ENCODE measurements at regions of chr12 and their contacts with region 1.

Region 1: DNA sequence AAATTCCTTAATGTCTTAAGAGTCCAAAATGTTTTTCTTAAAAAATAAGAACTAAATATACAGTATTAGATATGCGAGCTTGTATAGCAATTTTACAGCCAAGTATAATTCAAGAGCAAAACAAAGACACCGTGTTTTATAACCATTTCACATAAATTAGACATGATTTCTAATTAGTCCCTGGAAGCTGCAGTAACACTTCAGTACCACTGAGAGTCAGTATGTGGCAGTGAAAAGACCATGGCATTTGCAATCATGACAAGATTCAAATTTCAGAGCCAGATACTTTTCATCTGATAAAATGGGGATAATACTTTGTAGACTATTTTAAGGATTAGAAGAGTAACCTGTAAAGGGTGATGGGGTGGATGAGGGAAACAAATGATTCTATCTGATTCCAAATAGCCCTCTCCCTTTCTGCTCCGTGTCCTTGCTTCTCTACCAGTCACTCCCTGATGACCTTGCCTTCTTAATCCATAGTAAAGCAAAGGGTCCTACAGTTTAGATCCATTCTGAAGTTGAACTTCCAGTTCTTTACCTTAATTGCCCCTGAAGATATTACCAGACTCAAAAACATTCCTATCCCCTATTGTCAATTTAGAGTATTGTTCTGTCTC is 145.4 kb upstream of the ABCD2 start:
- DNase-seq: peak; percentile 52
- H3K4me3 ChIP-seq: no peak overlapping the region
- H3K27ac ChIP-seq: no peak overlapping the region
- H3K4me1 ChIP-seq: no peaks in the 10 kb centered on the region
- H3K27me3 ChIP-seq: no peaks in the 10 kb centered on the region
- CTCF ChIP-seq: peak; percentile 59 to 64
- POLR2A ChIP-seq: no peak

Region 2: GRCh38 chr12:39553471-39553870 is 211.6 kb before region 1 on chr12:
- CTCF ChIA-PET with region 1: no interaction called
- POLR2A ChIA-PET with region 1: no interaction called
- dilution Hi-C with region 1: no loop called
- intact Hi-C with region 1: no loop called
- DNase-seq: no peak
- H3K4me3 ChIP-seq: no peak overlapping the region
- H3K27ac ChIP-seq: no peak overlapping the region
- H3K4me1 ChIP-seq: no peaks in the 10 kb centered on the region
- H3K27me3 ChIP-seq: no peaks in the 10 kb centered on the region
- CTCF ChIP-seq: no peak
- POLR2A ChIP-seq: no peak

Region 3: GRCh38 chr12:39958377-39958776 is 193.3 kb after region 1 on chr12:
- CTCF ChIA-PET with region 1: interaction called, 3 read pairs
- POLR2A ChIA-PET with region 1: no interaction called
- dilution Hi-C with region 1: no loop called
- intact Hi-C with region 1: loop called (anchors 1 kb)
- DNase-seq: peak; percentile 10
- H3K4me3 ChIP-seq: no peak overlapping the region
- H3K27ac ChIP-seq: no peak overlapping the region
- H3K4me1 ChIP-seq: no peaks in the 10 kb centered on the region
- H3K27me3 ChIP-seq: no peaks in the 10 kb centered on the region
- CTCF ChIP-seq: peak in 1 of 2 donors; percentile 19
- POLR2A ChIP-seq: no peak

Region 4: GRCh38 chr12:39990122-39991101 is 225.4 kb after region 1 on chr12:
- CTCF ChIA-PET with region 1: interaction called, 70 read pairs
- POLR2A ChIA-PET with region 1: no interaction called
- dilution Hi-C with region 1: no loop called
- intact Hi-C with region 1: loop called (anchors 1 kb)
- DNase-seq: peak; percentile 65
- H3K4me3 ChIP-seq: no peak overlapping the region
- H3K27ac ChIP-seq: no peak overlapping the region
- H3K4me1 ChIP-seq: no peaks in the 10 kb centered on the region
- H3K27me3 ChIP-seq: no peaks in the 10 kb centered on the region
- CTCF ChIP-seq: peak; percentile 83 to 85
- POLR2A ChIP-seq: no peak

Region 5: GRCh38 chr12:40107098-40107802 is 342.2 kb after region 1 on chr12:
- CTCF ChIA-PET with region 1: interaction called, 16 read pairs
- POLR2A ChIA-PET with region 1: no interaction called
- dilution Hi-C with region 1: no loop called
- intact Hi-C with region 1: loop called (anchors 1 kb)
- DNase-seq: peak; percentile 72
- H3K4me3 ChIP-seq: peak overlapping the region in 2 of 3 experiments; percentile 17 to 67
- H3K27ac ChIP-seq: no peak overlapping the region
- H3K4me1 ChIP-seq: peaks cover 14% of the 10 kb centered on the region
- H3K27me3 ChIP-seq: no peaks in the 10 kb centered on the region
- CTCF ChIP-seq: peak; percentile 85 to 92
- POLR2A ChIP-seq: no peak